Dorsolateral prefrontal cortex (tissue), 120 donors: ENCODE measurements at regions of chr15 and their contacts with region 1.

Region 1: GRCh38 chr15:79028411-79028964 is 62.1 kb downstream of the RASGRF1 start:
- DNase-seq: peak in 5 of 10 donors; percentile 48 to 70 (median 55)
- H3K4me3 ChIP-seq: no peak overlapping the region
- H3K27ac ChIP-seq: peak overlapping the region in 3 of 59 donors; percentile 36 to 45 (median 39)
- H3K27me3 ChIP-seq: no peaks in the 10 kb centered on the region
- CTCF ChIP-seq: peak; percentile 55 to 96 (median 86)

Region 2: GRCh38 chr15:78979456-78980320 is 48.8 kb before region 1 on chr15:
- intact Hi-C with region 1: no loop called
- DNase-seq: peak in 7 of 10 donors; percentile 39 to 72 (median 54)
- H3K4me3 ChIP-seq: no peak overlapping the region
- H3K27ac ChIP-seq: peak overlapping the region in 5 of 59 donors; percentile 19 to 48 (median 38)
- H3K27me3 ChIP-seq: no peaks in the 10 kb centered on the region
- CTCF ChIP-seq: peak; percentile 33 to 79 (median 67)

Region 3: DNA sequence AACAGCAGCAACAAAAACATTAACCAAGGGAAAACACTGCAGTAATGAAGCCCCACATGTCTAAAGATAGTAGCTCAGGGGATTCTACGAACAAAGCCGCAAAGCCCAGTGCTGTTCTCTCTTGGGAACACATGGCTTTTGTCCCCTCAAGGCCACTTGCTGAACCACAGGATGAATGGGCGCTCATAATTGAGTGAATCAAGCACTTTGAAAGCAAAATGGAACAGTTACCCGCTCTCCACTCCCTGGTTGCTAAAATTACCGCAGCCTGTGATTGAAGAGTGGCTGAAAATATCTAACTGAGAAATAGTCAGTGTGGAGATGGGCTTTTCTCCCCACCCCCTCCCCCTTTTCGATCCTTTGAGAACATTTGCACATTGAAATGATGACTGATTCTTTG is 22.5 kb after region 1 on chr15:
- intact Hi-C with region 1: no loop called
- DNase-seq: peak in 2 of 10 donors; percentile 43
- H3K4me3 ChIP-seq: peak overlapping the region in 4 of 59 donors; percentile 4 to 31 (median 10)
- H3K27ac ChIP-seq: peak overlapping the region in 46 of 59 donors; percentile 1 to 74 (median 45)
- H3K27me3 ChIP-seq: no peaks in the 10 kb centered on the region
- CTCF ChIP-seq: no peak

Region 4: DNA sequence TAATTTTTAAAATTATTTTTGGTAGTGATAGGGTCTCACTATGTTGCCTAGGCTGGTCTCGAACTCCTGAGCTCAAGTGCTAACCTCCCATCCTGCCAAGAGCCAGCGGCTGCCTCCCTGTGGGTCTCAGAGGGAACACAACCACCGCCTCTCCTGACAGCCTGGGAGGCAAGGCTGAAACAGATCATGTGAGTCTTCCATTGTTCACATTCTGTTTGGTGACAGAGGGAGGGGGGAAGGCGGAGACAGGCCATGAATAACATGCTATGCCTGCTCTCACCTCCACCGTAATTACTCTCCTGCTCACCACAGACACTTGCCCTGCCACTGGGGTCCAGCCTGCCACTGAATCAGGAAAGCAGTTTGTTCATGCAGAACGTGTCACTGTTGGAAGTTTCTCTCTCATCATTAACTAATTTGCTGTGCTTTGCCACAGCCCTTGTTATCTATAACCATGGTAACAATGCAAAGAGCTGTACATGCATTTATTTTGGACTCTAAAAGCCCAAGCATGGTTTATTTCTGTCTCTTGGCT is 140.5 kb after region 1 on chr15:
- intact Hi-C with region 1: loop called in 1 of 2 experiments (anchors 5 kb)
- DNase-seq: peak in 8 of 10 donors; percentile 50 to 76 (median 60)
- H3K4me3 ChIP-seq: no peak overlapping the region
- H3K27ac ChIP-seq: peak overlapping the region in 46 of 59 donors; percentile 1 to 75 (median 50)
- H3K27me3 ChIP-seq: no peaks in the 10 kb centered on the region
- CTCF ChIP-seq: peak in 41 of 56 donors; percentile 4 to 60 (median 31)

Region 5: GRCh38 chr15:79184465-79184892 is 156.0 kb after region 1 on chr15:
- intact Hi-C with region 1: loop called (anchors 1 kb)
- DNase-seq: peak; percentile 70 to 91 (median 82)
- H3K4me3 ChIP-seq: no peak overlapping the region
- H3K27ac ChIP-seq: no peak overlapping the region
- H3K27me3 ChIP-seq: no peaks in the 10 kb centered on the region
- CTCF ChIP-seq: peak; percentile 88 to 100 (median 99)